AG04449 (cell line): ENCODE measurements at regions of chr14 and their contacts with region 1.

Region 1: DNA sequence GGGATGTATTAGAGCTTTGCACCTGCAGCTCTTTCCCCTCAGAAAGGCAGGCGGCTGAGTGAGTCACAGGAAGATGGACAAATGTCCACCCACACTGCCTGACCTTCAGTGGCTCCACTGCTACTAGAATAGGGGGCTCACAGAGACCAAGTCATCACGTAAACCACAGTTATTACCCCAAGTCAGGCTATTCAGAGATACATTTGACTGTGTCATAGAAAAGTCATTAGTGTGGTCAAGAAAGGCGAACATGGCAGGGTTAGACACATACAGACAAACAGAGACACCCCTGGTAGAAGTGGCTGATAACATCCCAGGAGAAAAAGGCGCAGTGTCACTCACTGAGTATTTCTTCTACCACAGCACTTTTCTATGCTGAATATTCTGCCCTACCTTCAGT is 36.0 kb downstream of the GCH1 start:
- DNase-seq: no peak
- H3K4me3 ChIP-seq: no peak overlapping the region
- CTCF ChIP-seq: no peak

Region 2: DNA sequence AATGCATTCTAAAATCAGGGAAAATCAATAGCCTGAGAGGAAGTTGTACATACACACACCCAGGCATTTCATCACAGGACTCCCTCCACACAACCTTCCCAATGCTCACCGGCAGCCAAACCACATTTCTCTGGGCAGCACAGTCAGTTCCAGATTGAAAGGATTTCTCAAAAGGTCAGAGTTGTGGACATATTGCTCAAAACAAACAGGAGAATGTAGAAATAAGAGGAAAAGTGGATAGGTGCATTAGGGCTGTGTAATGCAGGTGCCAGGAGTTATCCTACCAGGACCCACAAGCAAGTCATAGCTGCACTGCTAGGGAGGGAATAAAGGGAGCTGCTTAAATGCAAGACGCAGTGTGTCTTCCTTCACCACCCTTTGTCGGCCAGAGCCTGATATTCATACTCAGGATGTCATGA is 26.9 kb before region 1 on chr14:
- CTCF ChIA-PET with region 1: no interaction called
- POLR2A ChIA-PET with region 1: no interaction called
- DNase-seq: no peak
- H3K4me3 ChIP-seq: no peak overlapping the region
- CTCF ChIP-seq: no peak

Region 3: GRCh38 chr14:54893151-54893760 is 26.7 kb after region 1 on chr14:
- CTCF ChIA-PET with region 1: interaction called, 10 read pairs
- POLR2A ChIA-PET with region 1: no interaction called
- DNase-seq: peak; percentile 7
- H3K4me3 ChIP-seq: no peak overlapping the region
- CTCF ChIP-seq: peak; percentile 51